HEK293T (cell line): ENCODE measurements at regions of chrX and their contacts with region 1.

Region 1: GRCh38 chrX:107776649-107777535 is 641 bp upstream of the NCBP2L start:
- DNase-seq: peak; percentile 89

Region 2: GRCh38 chrX:107610667-107611066 is 166.2 kb before region 1 on chrX:
- CTCF ChIA-PET with region 1: no interaction called
- POLR2A ChIA-PET with region 1: no interaction called
- DNase-seq: no peak

Region 3: DNA sequence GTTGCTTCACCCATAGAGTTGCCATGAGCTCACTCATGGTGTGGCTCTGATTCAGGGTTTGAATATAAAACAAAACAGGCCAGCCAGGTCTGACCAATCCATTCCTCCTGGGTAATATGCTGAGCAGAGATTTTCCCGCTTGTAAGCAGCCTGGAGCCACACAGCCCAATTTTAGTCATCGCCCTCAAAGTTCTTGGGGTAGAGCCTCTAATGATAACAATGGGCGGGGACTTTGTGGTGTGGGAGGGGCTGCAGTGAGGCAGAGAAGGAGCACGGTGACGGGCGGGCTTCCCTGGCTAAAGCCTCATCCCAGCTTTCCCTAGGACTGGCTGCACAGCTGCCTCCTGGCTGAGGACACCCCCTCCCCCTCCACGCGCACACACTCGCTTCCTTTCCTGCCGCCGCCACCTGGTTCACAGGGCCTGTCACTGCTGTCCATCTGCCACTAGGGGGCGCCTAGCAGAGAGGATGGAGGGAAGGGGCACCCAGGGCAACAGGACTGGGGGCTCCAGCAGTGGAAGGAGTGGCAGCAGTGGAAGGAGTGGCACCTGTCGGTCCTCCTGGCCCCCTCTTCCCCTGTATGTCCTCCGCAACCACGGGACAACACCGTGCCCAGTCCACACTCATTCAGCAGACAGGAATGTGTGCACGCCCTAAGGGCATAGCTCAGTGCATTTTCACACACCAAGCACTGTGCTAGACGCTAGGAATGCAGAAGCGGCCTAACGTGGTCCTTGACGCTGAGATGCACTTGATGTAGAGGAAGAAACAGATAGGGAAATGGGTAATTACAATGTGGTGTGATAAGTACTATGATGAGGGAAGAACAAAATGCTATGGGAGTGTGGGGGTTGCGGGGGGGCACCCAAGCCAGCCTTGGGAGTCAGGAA is 121.8 kb before region 1 on chrX:
- CTCF ChIA-PET with region 1: interaction called, 173 read pairs
- POLR2A ChIA-PET with region 1: interaction called, 12 read pairs
- DNase-seq: peak; percentile 80

Region 4: DNA sequence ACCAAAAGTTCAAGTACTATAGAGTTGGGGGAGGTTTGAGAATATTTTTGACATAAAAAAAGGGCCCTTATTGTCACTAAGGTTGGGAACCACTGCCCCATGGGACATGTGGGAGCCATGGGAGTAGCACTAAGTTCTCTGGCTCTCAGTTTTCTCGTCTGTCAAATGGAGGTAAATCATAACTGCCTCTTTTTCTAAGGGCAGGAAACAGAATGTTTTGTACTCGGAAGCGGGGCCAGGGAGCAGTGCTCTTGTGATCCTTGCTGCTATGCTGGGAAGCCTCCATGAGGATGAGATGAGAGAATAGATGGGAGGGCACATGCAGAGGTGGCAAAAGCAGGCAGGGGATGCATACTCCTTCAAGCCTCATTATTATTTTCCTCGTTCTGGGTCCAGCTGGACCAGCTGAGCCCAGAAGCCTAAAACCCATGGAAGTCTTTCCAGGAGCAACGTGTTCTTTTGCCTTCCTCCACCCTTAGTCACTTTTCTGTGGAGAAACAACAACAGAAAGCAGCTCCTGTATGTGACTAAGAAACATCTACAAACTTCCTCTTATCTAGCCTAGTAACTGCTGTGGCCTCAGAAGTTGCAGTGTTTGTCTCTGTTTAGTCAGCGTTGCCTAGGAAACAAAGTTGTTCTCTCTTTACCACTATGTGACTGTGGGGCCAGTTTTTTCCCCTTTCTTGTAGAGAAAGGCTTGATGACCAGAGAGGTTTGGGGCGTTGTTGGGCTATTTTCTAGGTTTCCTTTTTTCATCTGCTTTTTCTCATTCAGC is 66.1 kb before region 1 on chrX:
- CTCF ChIA-PET with region 1: interaction called, 32 read pairs
- POLR2A ChIA-PET with region 1: interaction called, 198 read pairs
- DNase-seq: peak; percentile 59

Region 5: GRCh38 chrX:107731831-107732502 is 44.9 kb before region 1 on chrX:
- CTCF ChIA-PET with region 1: interaction called, 6 read pairs
- POLR2A ChIA-PET with region 1: interaction called, 52 read pairs
- DNase-seq: peak; percentile 61